Naive thymus-derived CD4-positive, alpha-beta T cell (primary cell): ENCODE measurements at regions of chr9 and their contacts with region 1.

Region 1: GRCh38 chr9:91193658-91194391 is 167.9 kb downstream of the AUH start:
- DNase-seq: peak; percentile 48 to 90 (median 68)
- ATAC-seq: peak; percentile 68
- H3K4me3 ChIP-seq: peak overlapping the region; percentile 75
- H3K4me3 Mint-ChIP-seq: peak overlapping the region; percentile 77 to 94 (median 90)
- H3K27ac ChIP-seq: peak overlapping the region; percentile 30
- H3K27ac Mint-ChIP-seq: peak overlapping the region; percentile 76 to 99 (median 92)
- H3K4me1 ChIP-seq: peaks cover 20% of the 10 kb centered on the region in 2 donors
- H3K4me1 Mint-ChIP-seq: peaks cover 6 to 80% (median 34%) of the 10 kb centered on the region in 7 donors
- H3K27me3 ChIP-seq: no peaks in the 10 kb centered on the region
- H3K27me3 Mint-ChIP-seq: no peaks in the 10 kb centered on the region

Region 2: DNA sequence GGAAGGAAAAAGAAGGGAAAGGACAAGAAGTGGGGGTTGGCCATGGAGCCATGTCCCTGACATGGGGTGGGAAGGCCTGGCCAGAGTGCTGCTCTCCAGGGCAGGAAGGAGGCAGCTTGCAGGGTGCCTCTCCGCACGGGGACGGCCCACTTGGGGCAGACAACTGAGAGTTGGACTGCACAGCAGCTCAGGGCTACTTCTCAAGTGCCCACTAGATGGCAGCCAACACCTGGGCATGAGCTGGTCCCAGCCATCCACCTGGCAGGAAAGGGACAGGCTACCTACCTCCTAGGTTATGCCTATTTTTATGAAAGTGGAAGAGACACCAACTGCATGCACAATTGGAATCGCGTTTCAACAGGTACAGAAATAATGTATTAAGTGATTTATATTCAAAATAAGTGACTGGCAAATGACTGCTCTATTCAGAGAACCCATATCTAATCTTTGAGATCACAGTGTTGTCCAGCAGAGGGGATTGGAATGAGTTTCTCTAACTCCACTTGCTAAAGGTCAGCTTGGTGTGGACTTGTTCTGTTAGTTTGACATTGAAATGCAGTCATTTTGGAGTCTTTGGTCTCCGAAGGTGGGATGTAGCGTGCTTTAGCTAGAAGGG is 278.8 kb before region 1 on chr9:
- CTCF ChIA-PET with region 1: no interaction called
- POLR2A ChIA-PET with region 1: no interaction called
- intact Hi-C with region 1: loop called in 1 of 2 experiments (anchors 10 kb)
- DNase-seq: peak; percentile 37 to 71 (median 61)
- ATAC-seq: peak; percentile 90
- H3K4me3 ChIP-seq: no peak overlapping the region
- H3K4me3 Mint-ChIP-seq: no peak overlapping the region
- H3K27ac ChIP-seq: no peak overlapping the region
- H3K27ac Mint-ChIP-seq: peak overlapping the region in 1 of 9 donors; percentile 60
- H3K4me1 ChIP-seq: no peaks in the 10 kb centered on the region
- H3K4me1 Mint-ChIP-seq: peaks cover 0 to 2% (median 0%) of the 10 kb centered on the region in 7 donors
- H3K27me3 ChIP-seq: no peaks in the 10 kb centered on the region
- H3K27me3 Mint-ChIP-seq: no peaks in the 10 kb centered on the region

Region 3: DNA sequence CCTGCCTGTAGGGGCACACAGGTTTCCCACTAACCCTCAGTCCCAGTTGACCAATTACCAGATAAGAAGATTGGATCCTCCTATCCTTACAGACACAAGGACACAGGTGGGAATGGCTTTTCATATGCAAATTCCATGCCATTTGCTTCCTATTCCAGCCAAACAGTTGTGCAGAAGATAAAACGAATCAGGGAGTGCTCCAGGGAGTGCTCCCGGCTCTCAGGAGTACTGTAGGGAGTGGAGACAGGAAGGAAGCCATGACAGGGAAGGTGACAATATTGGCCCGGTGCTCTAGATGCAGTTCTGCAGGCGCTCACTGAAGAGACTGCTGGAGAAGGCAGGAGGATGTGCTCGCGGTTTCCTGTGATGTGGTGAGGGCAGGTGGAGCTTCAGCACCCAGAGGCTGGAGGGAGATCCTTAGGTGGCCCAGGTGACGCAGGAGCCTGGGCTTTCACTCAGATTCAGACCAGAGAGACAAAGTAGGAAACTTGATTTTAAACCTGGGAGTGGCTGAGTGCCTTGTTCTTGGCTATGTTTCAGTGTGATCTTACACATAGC is 92.1 kb before region 1 on chr9:
- CTCF ChIA-PET with region 1: no interaction called
- POLR2A ChIA-PET with region 1: no interaction called
- intact Hi-C with region 1: loop called (anchors 1 kb)
- DNase-seq: peak; percentile 31 to 91 (median 87)
- ATAC-seq: peak; percentile 90
- H3K4me3 ChIP-seq: no peak overlapping the region
- H3K4me3 Mint-ChIP-seq: peak overlapping the region in 9 of 10 donors; percentile 44 to 82 (median 66)
- H3K27ac ChIP-seq: no peak overlapping the region
- H3K27ac Mint-ChIP-seq: peak overlapping the region in 7 of 9 donors; percentile 43 to 85 (median 78)
- H3K4me1 ChIP-seq: peaks cover 32 to 34% of the 10 kb centered on the region in 2 donors
- H3K4me1 Mint-ChIP-seq: peaks cover 27 to 61% (median 36%) of the 10 kb centered on the region in 7 donors
- H3K27me3 ChIP-seq: no peaks in the 10 kb centered on the region
- H3K27me3 Mint-ChIP-seq: peaks cover 0 to 25% (median 2%) of the 10 kb centered on the region in 5 donors

Region 4: GRCh38 chr9:91150998-91151717 is 42.7 kb before region 1 on chr9:
- CTCF ChIA-PET with region 1: no interaction called
- POLR2A ChIA-PET with region 1: no interaction called
- intact Hi-C with region 1: loop called (anchors 1 to 10 kb)
- DNase-seq: peak in 8 of 9 donors; percentile 44 to 82 (median 71)
- ATAC-seq: peak; percentile 88
- H3K4me3 ChIP-seq: peak overlapping the region; percentile 17
- H3K4me3 Mint-ChIP-seq: peak overlapping the region; percentile 3 to 68 (median 50)
- H3K27ac ChIP-seq: no peak overlapping the region
- H3K27ac Mint-ChIP-seq: peak overlapping the region in 6 of 9 donors; percentile 44 to 93 (median 72)
- H3K4me1 ChIP-seq: peaks cover 17 to 24% of the 10 kb centered on the region in 2 donors
- H3K4me1 Mint-ChIP-seq: peaks cover 25 to 89% (median 35%) of the 10 kb centered on the region in 7 donors
- H3K27me3 ChIP-seq: no peaks in the 10 kb centered on the region
- H3K27me3 Mint-ChIP-seq: no peaks in the 10 kb centered on the region

Region 5: DNA sequence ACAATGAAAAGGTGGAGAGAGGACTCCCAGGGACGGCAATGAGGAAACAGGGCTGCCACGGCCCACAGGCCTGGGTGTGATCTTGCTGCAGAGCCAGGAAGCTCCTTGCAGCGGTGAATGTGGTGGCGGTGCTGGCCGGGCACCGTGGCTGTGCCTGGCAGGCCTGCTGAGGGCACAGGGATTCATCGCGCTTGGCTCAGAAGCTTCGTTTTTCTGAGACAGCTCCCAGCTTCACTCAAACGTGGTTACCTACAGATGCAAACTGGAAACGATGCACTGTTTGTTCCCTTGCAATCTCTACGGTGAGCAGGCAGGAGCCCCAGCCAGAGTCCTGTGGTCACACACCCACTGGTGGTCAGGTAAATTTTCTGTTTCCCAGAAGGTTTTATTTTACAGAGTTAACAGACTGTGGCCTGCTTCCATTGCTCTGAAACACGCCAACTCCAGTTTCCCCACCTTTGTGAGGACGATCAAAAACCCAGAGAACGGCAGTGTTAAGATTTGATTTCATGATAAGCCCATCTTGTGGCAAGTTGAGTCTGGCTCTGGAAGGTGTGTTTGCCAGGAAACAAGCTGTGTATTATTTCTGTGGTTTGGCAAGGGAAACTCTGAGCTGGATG is 16.1 kb before region 1 on chr9:
- CTCF ChIA-PET with region 1: interaction called, 4 read pairs
- POLR2A ChIA-PET with region 1: interaction called, 3 read pairs
- intact Hi-C with region 1: loop called (anchors 1 to 2 kb)
- DNase-seq: peak in 2 of 9 donors; percentile 13 to 64
- ATAC-seq: peak; percentile 60
- H3K4me3 ChIP-seq: no peak overlapping the region
- H3K4me3 Mint-ChIP-seq: peak overlapping the region; percentile 39 to 73 (median 58)
- H3K27ac ChIP-seq: no peak overlapping the region
- H3K27ac Mint-ChIP-seq: peak overlapping the region in 8 of 9 donors; percentile 19 to 91 (median 64)
- H3K4me1 ChIP-seq: peaks cover 16 to 25% of the 10 kb centered on the region in 2 donors
- H3K4me1 Mint-ChIP-seq: peaks cover 23 to 62% (median 33%) of the 10 kb centered on the region in 7 donors
- H3K27me3 ChIP-seq: no peaks in the 10 kb centered on the region
- H3K27me3 Mint-ChIP-seq: no peaks in the 10 kb centered on the region

Region 6: DNA sequence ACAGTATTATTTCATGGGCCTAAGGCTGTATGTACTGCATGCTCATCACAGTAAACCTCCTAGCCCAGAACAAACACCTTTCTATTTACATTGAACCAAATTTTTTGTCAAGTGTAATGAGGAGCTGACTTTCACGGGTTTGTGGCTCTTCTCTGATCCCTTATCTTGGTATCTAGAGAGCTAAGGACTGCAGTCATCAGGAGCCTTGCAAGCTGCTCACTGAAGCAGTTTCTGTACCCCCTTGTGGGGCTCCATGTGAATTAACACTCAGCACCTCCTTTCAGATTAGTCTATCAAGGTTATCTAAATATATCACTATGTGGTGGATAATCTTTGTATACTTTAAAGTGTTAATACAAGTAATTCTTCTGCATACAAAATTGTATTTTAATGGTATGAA is 59.7 kb after region 1 on chr9:
- CTCF ChIA-PET with region 1: interaction called, 6 read pairs
- POLR2A ChIA-PET with region 1: no interaction called
- intact Hi-C with region 1: loop called in 1 of 2 experiments (anchors 1 kb)
- DNase-seq: peak in 6 of 9 donors; percentile 5 to 32 (median 12)
- ATAC-seq: peak; percentile 64
- H3K4me3 ChIP-seq: no peak overlapping the region
- H3K4me3 Mint-ChIP-seq: no peak overlapping the region
- H3K27ac ChIP-seq: no peak overlapping the region
- H3K27ac Mint-ChIP-seq: peak overlapping the region in 1 of 9 donors; percentile 23
- H3K4me1 ChIP-seq: peaks cover 0 to 8% of the 10 kb centered on the region in 2 donors
- H3K4me1 Mint-ChIP-seq: peaks cover 0 to 45% (median 6%) of the 10 kb centered on the region in 7 donors
- H3K27me3 ChIP-seq: no peaks in the 10 kb centered on the region
- H3K27me3 Mint-ChIP-seq: no peaks in the 10 kb centered on the region

Region 7: GRCh38 chr9:91711755-91712601 is 518.2 kb after region 1 on chr9:
- CTCF ChIA-PET with region 1: no interaction called
- POLR2A ChIA-PET with region 1: no interaction called
- intact Hi-C with region 1: loop called in 1 of 2 experiments (anchors 2 kb)
- DNase-seq: peak in 7 of 9 donors; percentile 6 to 64 (median 34)
- ATAC-seq: peak; percentile 90
- H3K4me3 ChIP-seq: peak overlapping the region; percentile 2
- H3K4me3 Mint-ChIP-seq: peak overlapping the region in 1 of 10 donors; percentile 15
- H3K27ac ChIP-seq: no peak overlapping the region
- H3K27ac Mint-ChIP-seq: no peak overlapping the region
- H3K4me1 ChIP-seq: peaks cover 5 to 6% of the 10 kb centered on the region in 2 donors
- H3K4me1 Mint-ChIP-seq: peaks cover 0 to 6% (median 3%) of the 10 kb centered on the region in 7 donors
- H3K27me3 ChIP-seq: no peaks in the 10 kb centered on the region
- H3K27me3 Mint-ChIP-seq: peaks cover 19 to 34% (median 26%) of the 10 kb centered on the region in 5 donors